ENCODE measurements at regions of chr3 and their contacts with region 1.

Region 1: DNA sequence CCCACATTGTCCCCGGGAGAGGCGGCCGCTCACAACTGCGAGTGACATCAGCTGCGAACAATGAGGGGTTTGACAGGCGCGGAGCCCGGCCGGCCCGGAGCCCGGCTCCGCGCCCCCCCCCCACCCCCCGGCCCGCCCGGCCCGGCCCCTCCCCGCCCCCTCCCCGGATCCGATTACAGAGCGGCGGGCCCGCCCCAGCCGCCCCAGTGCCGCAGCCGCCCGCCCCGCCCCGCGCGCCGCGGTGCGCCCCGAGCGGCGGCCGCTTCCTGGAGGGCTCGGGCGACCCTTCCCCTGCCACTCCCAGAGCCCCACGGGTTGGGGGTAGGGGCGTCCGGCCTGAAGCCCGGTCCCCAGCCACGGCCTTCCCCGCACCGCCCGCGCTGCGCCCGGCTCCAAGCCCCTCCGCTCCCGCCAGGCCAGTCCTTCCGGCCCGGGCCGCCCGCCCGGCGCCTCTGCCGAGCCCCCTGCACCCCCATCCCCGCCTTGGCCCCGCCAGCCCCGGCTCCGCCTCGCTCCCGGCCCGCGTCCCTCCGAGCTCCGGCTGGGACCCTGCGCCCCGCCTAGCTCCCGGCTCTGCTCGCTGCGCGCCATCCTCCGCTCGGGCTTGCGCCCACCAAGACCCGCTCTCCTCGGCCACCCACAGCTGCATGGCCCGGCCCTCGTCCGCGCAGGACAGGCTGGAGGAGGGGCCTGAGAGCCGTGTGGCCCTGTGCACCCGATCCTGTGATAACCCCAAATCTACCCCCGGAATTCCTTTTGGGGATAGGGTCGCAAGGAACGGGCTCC is at the start of gene PCBP4:
- DNase-seq: peak; percentile 42
- ATAC-seq: peak; percentile 77
- H3K4me3 Mint-ChIP-seq: peak within 1 kb of the TSS; percentile 85
- H3K27ac Mint-ChIP-seq: peak within 1 kb of the TSS; percentile 66
- H3K4me1 Mint-ChIP-seq: peaks cover 16% of the 10 kb centered on the region
- H3K27me3 Mint-ChIP-seq: peaks cover 5% of the 10 kb centered on the region
- CTCF ChIP-seq: no peak
- total RNA-seq, gene PCBP4: 10.3 and 11.0 TPM in 2 replicates

Region 2: DNA sequence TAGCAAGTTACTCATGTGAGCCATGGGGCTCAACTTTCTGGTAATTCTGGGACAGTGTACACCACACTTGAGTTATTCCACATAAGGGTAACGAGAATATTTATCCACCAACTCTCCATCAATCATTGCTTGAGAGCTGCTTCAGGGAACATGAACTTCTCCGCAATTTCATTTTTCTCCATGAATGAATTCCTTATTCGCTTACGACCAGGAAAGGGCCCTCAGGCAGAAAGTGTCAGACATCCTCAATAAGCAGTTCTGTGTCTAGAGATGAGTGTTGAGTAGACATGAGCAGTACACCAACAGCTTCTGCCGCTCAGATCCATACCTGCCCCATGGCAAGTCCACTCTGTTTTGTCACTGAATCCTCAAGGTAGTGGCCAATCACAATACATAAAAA is 131.0 kb before region 1 on chr3:
- CTCF ChIA-PET with region 1: no interaction called
- POLR2A ChIA-PET with region 1: no interaction called
- intact Hi-C with region 1: no loop called
- DNase-seq: no peak
- ATAC-seq: no peak
- H3K4me3 Mint-ChIP-seq: no peak overlapping the region
- H3K27ac Mint-ChIP-seq: no peak overlapping the region
- H3K4me1 Mint-ChIP-seq: no peaks in the 10 kb centered on the region
- H3K27me3 Mint-ChIP-seq: peaks cover 18% of the 10 kb centered on the region
- CTCF ChIP-seq: no peak

Region 3: GRCh38 chr3:51908026-51908425 is 59.6 kb before region 1 on chr3:
- CTCF ChIA-PET with region 1: no interaction called
- POLR2A ChIA-PET with region 1: no interaction called
- intact Hi-C with region 1: no loop called
- DNase-seq: no peak
- ATAC-seq: no peak
- H3K4me3 Mint-ChIP-seq: no peak overlapping the region
- H3K27ac Mint-ChIP-seq: no peak overlapping the region
- H3K4me1 Mint-ChIP-seq: no peaks in the 10 kb centered on the region
- H3K27me3 Mint-ChIP-seq: peaks cover 23% of the 10 kb centered on the region
- CTCF ChIP-seq: no peak

Region 4: DNA sequence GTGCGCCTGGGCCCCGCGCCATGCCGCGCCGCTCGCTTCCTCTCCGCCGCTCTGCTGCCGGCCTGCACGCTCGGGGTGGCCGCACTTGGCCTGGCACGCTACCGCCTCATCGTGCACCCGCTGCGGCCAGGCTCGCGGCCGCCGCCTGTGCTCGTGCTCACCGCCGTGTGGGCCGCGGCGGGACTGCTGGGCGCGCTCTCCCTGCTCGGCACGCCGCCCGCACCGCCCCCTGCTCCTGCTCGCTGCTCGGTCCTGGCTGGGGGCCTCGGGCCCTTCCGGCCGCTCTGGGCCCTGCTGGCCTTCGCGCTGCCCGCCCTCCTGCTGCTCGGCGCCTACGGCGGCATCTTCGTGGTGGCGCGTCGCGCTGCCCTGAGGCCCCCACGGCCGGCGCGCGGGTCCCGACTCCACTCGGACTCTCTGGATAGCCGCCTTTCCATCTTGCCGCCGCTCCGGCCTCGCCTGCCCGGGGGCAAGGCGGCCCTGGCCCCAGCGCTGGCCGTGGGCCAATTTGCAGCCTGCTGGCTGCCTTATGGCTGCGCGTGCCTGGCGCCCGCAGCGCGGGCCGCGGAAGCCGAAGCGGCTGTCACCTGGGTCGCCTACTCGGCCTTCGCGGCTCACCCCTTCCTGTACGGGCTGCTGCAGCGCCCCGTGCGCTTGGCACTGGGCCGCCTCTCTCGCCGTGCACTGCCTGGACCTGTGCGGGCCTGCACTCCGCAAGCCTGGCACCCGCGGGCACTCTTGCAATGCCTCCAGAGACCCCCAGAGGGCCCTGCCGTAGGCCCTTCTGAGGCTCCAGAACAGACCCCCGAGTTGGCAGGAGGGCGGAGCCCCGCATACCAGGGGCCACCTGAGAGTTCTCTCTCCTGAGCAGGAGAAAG is 11.4 kb before region 1 on chr3:
- CTCF ChIA-PET with region 1: no interaction called
- POLR2A ChIA-PET with region 1: interaction called, 4 read pairs
- intact Hi-C with region 1: loop called (anchors 1 kb)
- DNase-seq: peak; percentile 47
- ATAC-seq: peak; percentile 83
- H3K4me3 Mint-ChIP-seq: peak overlapping the region; percentile 24
- H3K27ac Mint-ChIP-seq: no peak overlapping the region
- H3K4me1 Mint-ChIP-seq: peaks cover 2% of the 10 kb centered on the region
- H3K27me3 Mint-ChIP-seq: peaks cover 19% of the 10 kb centered on the region
- CTCF ChIP-seq: no peak

Region 5: GRCh38 chr3:52004163-52004787 is 36.7 kb after region 1 on chr3:
- CTCF ChIA-PET with region 1: no interaction called
- POLR2A ChIA-PET with region 1: no interaction called
- intact Hi-C with region 1: no loop called
- DNase-seq: no peak
- ATAC-seq: no peak
- H3K4me3 Mint-ChIP-seq: no peak overlapping the region
- H3K27ac Mint-ChIP-seq: no peak overlapping the region
- H3K4me1 Mint-ChIP-seq: peaks cover 5% of the 10 kb centered on the region
- H3K27me3 Mint-ChIP-seq: peaks cover 2% of the 10 kb centered on the region
- CTCF ChIP-seq: no peak

Measured in activated B cell treated with CpG ODN at 0.5 μM for 24 hours (primary cell).